ENCODE measurements at regions of chr20 and their contacts with region 1.

Region 1: DNA sequence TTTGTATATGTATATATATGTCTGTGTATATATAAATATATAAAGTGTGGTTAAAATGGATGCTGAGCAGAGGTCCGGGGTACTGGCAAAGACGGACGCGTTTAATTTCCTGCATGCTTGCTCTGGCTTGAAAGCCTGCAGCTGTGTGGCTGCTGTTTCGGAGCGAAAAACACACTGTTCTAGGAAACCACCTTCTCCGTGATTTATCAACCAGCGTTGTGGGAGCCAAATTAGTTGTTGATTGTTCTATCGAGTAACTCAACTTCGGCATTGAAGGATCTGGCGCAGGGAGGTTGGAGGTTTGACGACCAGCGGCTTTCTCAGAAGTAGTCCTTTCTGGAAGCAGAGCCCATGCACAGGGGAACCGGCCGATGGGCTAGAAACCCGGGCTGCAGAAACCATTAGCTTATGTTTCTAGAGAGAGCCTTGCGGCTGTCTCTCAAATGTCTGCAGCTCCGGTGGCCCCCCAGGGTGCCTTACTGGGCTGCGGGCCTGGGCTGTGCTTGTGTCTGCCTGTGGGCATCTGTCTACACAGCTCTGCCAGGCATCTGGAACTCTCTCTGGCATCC is 81.8 kb downstream of the EDN3 start:
- DNase-seq: no peak
- ATAC-seq: no peak
- H3K4me3 ChIP-seq: no peak overlapping the region
- H3K27ac ChIP-seq: no peak overlapping the region
- H3K4me1 ChIP-seq: no peaks in the 10 kb centered on the region
- H3K27me3 ChIP-seq: peaks cover 0 to 35% of the 10 kb centered on the region in 2 experiments; a peak in 4 of 5 replicates
- CTCF ChIP-seq: no peak
- EP300 ChIP-seq: no peak
- POLR2A ChIP-seq: no peak
- RAD21 ChIP-seq: no peak

Region 2: DNA sequence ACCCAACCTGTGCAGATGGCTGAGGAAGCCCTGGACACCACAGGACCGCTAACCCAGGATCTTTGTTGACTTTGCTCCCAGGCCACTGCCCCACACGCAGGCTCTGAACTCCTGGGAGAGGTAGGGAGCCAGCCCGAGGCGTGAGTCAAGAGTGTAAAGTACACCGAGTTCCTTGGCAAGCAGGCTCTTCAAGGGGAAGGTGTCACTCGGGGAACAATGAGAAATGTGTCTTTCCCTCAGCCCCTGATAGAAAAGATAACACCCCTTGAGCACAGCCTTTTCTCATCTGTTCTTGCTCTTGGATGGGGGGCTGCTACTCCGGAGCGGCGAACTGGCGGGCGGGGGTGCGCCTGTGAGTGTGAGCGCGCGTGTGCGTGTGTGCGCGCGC is 82.3 kb before region 1 on chr20:
- CTCF ChIA-PET with region 1: no interaction called
- POLR2A ChIA-PET with region 1: no interaction called
- in situ Hi-C with region 1: no loop called
- intact Hi-C with region 1: no loop called
- DNase-seq: no peak
- ATAC-seq: no peak
- H3K4me3 ChIP-seq: no peak overlapping the region
- H3K27ac ChIP-seq: no peak overlapping the region
- H3K4me1 ChIP-seq: no peaks in the 10 kb centered on the region
- H3K27me3 ChIP-seq: peaks cover 5 to 54% of the 10 kb centered on the region in 2 experiments; a peak in 4 of 5 replicates
- CTCF ChIP-seq: no peak
- EP300 ChIP-seq: no peak
- POLR2A ChIP-seq: no peak
- RAD21 ChIP-seq: no peak

Region 3: DNA sequence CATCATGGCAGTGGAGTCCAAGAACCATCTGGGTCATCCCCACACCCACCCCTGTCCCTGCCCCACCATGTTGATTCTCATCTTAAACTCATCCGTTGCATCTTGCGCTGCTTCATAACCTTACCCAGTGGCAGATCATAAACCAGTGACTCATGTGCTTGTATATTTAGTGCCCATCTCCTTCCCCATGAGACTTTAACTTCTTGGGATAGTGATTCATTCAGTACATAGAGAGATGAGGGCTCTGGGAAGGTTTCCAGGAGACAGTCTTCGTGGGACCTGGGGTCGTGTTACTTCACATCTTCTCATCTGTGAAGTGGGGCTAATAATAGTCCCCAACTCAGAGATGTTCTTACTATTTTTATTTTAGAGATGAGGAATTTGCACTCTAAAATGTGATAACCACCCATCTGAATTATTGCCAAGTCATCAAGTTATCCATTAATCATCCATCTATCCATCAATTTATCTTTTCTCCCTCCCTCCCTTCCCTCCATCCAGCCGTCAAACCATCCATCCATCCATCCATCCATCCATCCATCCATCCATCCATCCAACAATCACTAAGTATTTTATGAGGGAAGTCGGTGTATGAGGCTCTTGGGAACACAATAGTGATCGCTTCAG is 30.7 kb before region 1 on chr20:
- CTCF ChIA-PET with region 1: no interaction called
- POLR2A ChIA-PET with region 1: no interaction called
- in situ Hi-C with region 1: no loop called
- intact Hi-C with region 1: no loop called
- DNase-seq: no peak
- ATAC-seq: no peak
- H3K4me3 ChIP-seq: no peak overlapping the region
- H3K27ac ChIP-seq: no peak overlapping the region
- H3K4me1 ChIP-seq: peaks cover 18% of the 10 kb centered on the region
- H3K27me3 ChIP-seq: peaks cover 0 to 3% of the 10 kb centered on the region in 2 experiments; a peak in 3 of 5 replicates
- CTCF ChIP-seq: no peak
- EP300 ChIP-seq: no peak
- POLR2A ChIP-seq: no peak
- RAD21 ChIP-seq: no peak

Region 4: GRCh38 chr20:59364611-59365010 is 17.6 kb before region 1 on chr20:
- CTCF ChIA-PET with region 1: no interaction called
- POLR2A ChIA-PET with region 1: no interaction called
- in situ Hi-C with region 1: no loop called
- intact Hi-C with region 1: loop called (anchors 1 kb)
- DNase-seq: no peak
- ATAC-seq: peak; percentile 20; the same call in 1 of the 3 replicates
- H3K4me3 ChIP-seq: no peak overlapping the region
- H3K27ac ChIP-seq: no peak overlapping the region
- H3K4me1 ChIP-seq: no peaks in the 10 kb centered on the region
- H3K27me3 ChIP-seq: peaks cover 0 to 42% of the 10 kb centered on the region in 2 experiments; a peak in 2 of 5 replicates
- CTCF ChIP-seq: no peak
- EP300 ChIP-seq: no peak
- POLR2A ChIP-seq: no peak
- RAD21 ChIP-seq: no peak

Region 5: DNA sequence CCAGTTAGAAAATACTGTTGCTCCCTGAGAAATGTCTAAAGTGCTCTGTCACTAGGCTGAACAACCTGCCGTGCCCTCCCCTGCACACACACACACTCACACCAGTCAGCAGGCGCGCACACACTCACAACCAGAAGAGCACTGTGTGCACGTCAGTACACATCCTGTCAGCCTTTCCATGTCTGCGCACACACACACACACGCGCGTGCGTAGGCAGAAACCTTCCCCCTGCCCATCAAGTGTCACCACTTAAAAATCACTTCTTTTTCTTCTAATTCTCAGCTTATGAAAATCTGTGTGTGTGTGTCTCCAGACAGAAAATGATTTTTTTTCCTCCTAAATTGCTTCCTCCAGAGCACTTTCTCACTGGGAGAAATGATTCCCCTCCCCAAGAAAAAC is 18.5 kb after region 1 on chr20:
- CTCF ChIA-PET with region 1: no interaction called
- POLR2A ChIA-PET with region 1: no interaction called
- in situ Hi-C with region 1: no loop called
- intact Hi-C with region 1: no loop called
- DNase-seq: no peak
- ATAC-seq: no peak
- H3K4me3 ChIP-seq: no peak overlapping the region
- H3K27ac ChIP-seq: no peak overlapping the region
- H3K4me1 ChIP-seq: no peaks in the 10 kb centered on the region
- H3K27me3 ChIP-seq: peaks cover 19 to 91% of the 10 kb centered on the region in 2 experiments
- CTCF ChIP-seq: no peak
- EP300 ChIP-seq: no peak
- POLR2A ChIP-seq: no peak
- RAD21 ChIP-seq: no peak

Measured in HepG2 (cell line).